Calu3 (cell line): ENCODE measurements at regions of chr11 and their contacts with region 1.

Region 1: GRCh38 chr11:66045177-66045639 is 3.8 kb downstream of the GAL3ST3 start:
- DNase-seq: peak; percentile 87
- H3K4me3 Mint-ChIP-seq: peak overlapping the region; percentile 46
- H3K27ac Mint-ChIP-seq: no peak overlapping the region
- H3K4me1 Mint-ChIP-seq: peaks cover 17% of the 10 kb centered on the region
- H3K27me3 Mint-ChIP-seq: peaks cover 42% of the 10 kb centered on the region
- CTCF ChIP-seq: peak; percentile 89

Region 2: DNA sequence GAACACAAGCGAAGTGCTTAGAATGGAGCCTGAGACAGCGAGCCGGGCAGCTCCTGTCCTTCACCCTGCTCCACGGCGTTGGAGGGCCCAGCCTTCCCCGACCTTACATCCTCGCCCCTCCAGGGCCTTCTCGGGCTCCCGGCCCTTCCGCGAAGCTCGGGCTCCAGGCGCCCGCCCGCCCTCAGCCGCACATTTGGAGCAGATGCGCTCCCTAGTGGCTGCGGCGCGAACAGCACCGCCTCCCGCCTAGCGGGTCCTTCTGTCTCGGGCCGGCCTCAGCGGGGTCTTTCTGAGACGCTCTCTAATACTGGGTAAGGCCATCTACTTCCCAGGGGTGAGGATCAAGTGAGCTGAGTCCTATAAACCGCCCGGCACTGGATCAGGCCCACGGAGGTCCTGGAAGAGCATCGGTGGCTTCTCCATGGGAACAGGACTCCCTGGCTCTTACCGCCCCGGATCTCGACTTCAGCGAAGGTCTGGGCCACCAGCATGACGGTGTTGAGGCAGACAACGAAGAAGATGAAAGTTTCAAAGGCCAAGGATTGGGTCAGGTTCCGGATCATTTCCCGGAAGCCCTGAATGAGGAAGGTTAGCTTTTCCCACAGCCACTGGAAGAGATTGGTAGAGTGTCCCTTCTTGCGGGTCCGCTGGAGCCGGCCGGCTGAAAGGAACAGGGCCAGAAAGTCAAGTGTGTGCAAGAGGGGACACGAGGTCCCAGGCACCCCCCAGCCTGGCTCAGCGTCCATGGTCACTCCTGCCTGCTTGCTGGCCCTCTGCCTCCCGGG is 22.6 kb before region 1 on chr11:
- CTCF ChIA-PET with region 1: interaction called, 16 read pairs
- intact Hi-C with region 1: no loop called
- DNase-seq: peak; percentile 84
- H3K4me3 Mint-ChIP-seq: peak overlapping the region; percentile 64
- H3K27ac Mint-ChIP-seq: peak overlapping the region; percentile 70
- H3K4me1 Mint-ChIP-seq: peaks cover 27% of the 10 kb centered on the region
- H3K27me3 Mint-ChIP-seq: peaks cover 23% of the 10 kb centered on the region
- CTCF ChIP-seq: peak; percentile 92